ENCODE measurements at regions of chr15 and their contacts with region 1.

Region 1: DNA sequence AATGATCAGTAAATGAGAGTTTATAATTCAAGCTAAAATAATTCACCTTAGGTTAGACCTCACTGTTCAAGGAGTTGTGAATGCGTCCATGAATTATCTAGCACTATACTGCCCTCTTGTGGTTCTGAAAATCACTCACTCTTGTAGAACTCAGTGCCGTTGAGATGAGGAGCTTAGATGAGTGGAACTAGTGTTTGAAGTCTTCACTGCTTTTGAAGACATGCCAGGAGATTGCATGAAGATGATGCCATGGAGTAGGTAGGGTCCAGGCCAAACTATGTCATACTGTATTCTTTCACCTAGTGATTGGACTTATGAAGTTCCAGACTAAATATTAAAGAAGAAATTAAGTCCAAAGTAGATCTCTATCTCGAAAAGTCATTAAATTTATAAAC is 28.8 kb downstream of the LYSMD4 start:
- DNase-seq: no peak
- H3K4me3 ChIP-seq: no peak overlapping the region
- CTCF ChIP-seq: peak; percentile 60

Region 2: DNA sequence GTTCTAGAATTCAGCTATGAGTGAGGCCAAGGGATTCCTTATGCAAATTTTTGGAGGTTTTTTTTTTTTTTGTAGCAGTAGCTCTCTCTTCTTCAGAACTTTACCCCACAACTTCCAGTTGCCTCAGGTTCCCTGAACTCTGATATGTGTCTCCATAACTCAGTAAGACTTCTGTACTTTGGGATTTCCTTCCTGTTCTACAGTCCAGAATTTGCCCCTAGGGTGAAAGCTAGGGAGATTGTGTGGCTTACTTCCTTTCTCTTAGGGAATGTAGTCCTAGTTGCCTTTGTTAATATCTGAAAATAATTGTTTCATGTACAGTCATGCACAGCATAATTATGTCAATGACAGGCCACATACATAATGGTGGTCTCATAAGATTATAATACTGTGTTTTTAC is 422.3 kb before region 1 on chr15:
- CTCF ChIA-PET with region 1: interaction called, 335 read pairs
- POLR2A ChIA-PET with region 1: no interaction called
- DNase-seq: no peak
- H3K4me3 ChIP-seq: no peak overlapping the region
- CTCF ChIP-seq: no peak

Region 3: GRCh38 chr15:99335508-99335907 is 368.9 kb before region 1 on chr15:
- CTCF ChIA-PET with region 1: interaction called, 25 read pairs
- POLR2A ChIA-PET with region 1: no interaction called
- DNase-seq: no peak
- H3K4me3 ChIP-seq: no peak overlapping the region
- CTCF ChIP-seq: no peak

Region 4: GRCh38 chr15:99442252-99442897 is 262.1 kb before region 1 on chr15:
- CTCF ChIA-PET with region 1: interaction called, 22 read pairs
- POLR2A ChIA-PET with region 1: no interaction called
- DNase-seq: peak; percentile 87
- H3K4me3 ChIP-seq: peak overlapping the region; percentile 27
- CTCF ChIP-seq: no peak

Region 5: DNA sequence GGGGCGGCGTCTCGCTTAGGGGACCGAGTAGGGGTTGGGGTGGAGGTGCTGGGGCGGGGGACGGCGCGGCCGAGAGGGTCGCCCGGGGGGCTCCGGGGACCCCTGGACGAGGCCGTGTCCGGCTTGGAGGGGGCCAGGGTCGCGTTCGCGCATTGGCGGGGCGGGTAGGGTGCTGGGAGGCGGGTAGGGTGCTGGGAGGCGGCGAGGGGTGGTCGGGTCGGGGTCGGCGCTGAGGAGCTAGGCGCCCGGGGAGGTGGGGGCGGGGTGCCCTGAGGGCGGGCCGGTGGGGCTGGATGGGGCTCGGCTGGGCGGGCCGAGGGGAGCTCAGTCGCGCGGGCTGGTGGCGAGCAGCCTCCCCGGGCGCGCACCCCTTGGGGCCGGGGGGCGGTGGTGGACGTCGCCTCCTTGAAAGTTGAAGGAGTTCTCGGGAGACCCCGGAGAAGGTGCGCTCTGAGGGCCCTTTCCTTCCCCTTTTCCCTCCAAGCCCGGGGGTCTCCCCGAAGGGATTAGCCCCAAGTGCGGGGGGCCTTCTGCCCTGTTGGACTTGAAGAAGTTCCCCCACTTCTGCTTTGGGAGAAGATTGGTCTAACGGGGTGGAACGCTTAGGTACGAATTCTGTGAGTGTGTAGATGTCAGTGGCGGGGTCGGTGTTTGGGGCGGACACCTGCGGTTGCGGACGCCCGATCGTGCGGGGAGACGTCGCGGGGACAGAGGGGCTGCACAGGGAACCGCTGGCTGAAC is 138.1 kb before region 1 on chr15:
- CTCF ChIA-PET with region 1: interaction called, 30 read pairs
- POLR2A ChIA-PET with region 1: no interaction called
- DNase-seq: no peak
- H3K4me3 ChIP-seq: peak overlapping the region; percentile 89
- CTCF ChIP-seq: no peak

Region 6: GRCh38 chr15:99692825-99693224 is 11.6 kb before region 1 on chr15:
- CTCF ChIA-PET with region 1: interaction called, 60 read pairs
- POLR2A ChIA-PET with region 1: no interaction called
- DNase-seq: no peak
- H3K4me3 ChIP-seq: no peak overlapping the region
- CTCF ChIP-seq: no peak